ENCODE measurements at regions of chr5 and their contacts with region 1.

Region 1: GRCh38 chr5:69334793-69335268 is 2.2 kb upstream of the CCDC125 start:
- DNase-seq: peak; percentile 72
- ATAC-seq: peak; percentile 81
- H3K4me3 ChIP-seq: peak overlapping the region; percentile 51 to 61 (median 51)
- H3K27ac ChIP-seq: no peak overlapping the region
- H3K4me1 ChIP-seq: peaks cover 53% of the 10 kb centered on the region
- H3K27me3 ChIP-seq: no peaks in the 10 kb centered on the region; a peak in 1 of 5 replicates
- CTCF ChIP-seq: peak; percentile 94
- EP300 ChIP-seq: no peak
- POLR2A ChIP-seq: no peak
- RAD21 ChIP-seq: peak; percentile 91

Region 2: DNA sequence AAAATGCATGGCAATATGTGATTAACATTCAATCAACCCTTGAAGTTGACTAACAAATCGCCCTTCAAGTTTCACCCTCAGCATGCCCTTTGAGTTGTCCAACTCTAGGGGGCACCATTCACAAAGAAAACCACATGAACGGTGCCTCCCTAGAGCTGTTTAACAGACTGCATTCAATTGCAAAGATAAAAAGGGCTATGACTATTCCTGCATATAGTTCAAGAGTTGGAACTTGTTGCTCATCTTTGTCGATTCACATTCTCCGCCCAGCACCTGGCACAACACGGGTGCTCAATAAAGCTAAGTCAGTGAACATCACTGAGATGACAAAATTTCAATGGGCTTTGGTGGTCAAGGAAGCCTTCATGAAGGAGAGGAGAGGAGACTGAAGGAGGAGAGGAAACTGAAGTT is 310.6 kb before region 1 on chr5:
- CTCF ChIA-PET with region 1: no interaction called
- POLR2A ChIA-PET with region 1: no interaction called
- in situ Hi-C with region 1: no loop called
- intact Hi-C with region 1: loop called (anchors 1 kb)
- DNase-seq: peak; percentile 58
- ATAC-seq: peak; percentile 90
- H3K4me3 ChIP-seq: no peak overlapping the region
- H3K27ac ChIP-seq: no peak overlapping the region
- H3K4me1 ChIP-seq: no peaks in the 10 kb centered on the region
- H3K27me3 ChIP-seq: no peaks in the 10 kb centered on the region; a peak in 1 of 5 replicates
- CTCF ChIP-seq: peak; percentile 84
- EP300 ChIP-seq: no peak
- POLR2A ChIP-seq: no peak
- RAD21 ChIP-seq: peak; percentile 82

Region 3: DNA sequence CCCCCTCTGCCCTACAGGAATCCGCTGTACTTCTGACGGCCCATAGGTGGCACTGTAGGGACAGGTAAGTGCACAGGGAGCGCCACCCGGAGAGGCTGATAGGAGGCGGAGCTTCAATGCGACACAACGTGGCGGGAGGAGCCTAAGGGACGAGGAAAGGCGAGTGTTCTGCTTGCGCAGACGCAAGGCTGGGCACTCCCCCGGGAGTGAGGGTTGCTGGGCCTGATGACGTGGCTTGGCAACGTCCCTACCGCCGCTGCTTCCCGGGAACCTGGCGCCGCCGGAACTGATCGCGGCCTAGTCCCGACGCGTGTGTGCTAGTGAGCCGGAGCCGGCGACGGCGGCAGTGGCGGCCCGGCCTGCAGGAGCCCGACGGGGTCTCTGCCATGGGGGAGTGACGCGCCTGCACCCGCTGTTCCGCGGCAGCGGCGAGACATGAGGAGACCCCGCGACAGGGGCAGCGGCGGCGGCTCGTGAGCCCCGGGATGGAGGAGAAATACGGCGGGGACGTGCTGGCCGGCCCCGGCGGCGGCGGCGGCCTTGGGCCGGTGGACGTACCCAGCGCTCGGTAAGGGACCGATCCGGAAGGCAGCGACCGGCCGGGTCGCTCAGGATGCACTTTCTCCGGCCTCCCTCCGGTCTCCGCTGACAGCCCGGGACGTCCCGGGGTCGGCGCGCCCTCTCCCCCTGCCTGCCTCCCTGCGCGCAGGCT is 240.9 kb before region 1 on chr5 and contains the start of gene SLC30A5:
- CTCF ChIA-PET with region 1: no interaction called
- POLR2A ChIA-PET with region 1: interaction called, 27 read pairs
- in situ Hi-C with region 1: loop called (anchors 10 kb)
- intact Hi-C with region 1: loop called (anchors 2 kb)
- DNase-seq: peak; percentile 98
- ATAC-seq: peak; percentile 98
- H3K4me3 ChIP-seq: peak within 1 kb of the TSS; percentile 70 to 88 (median 72)
- H3K27ac ChIP-seq: peak within 1 kb of the TSS; percentile 88
- H3K4me1 ChIP-seq: peaks cover 47% of the 10 kb centered on the region
- H3K27me3 ChIP-seq: no peaks in the 10 kb centered on the region
- CTCF ChIP-seq: peak; percentile 98
- EP300 ChIP-seq: 0 out of 4 replicates have a peak, but pooled peaks have one; percentile 7 to 14
- POLR2A ChIP-seq: peak; percentile 92 to 95
- RAD21 ChIP-seq: peak; percentile 76
- total RNA-seq, gene SLC30A5: 38.0 and 53.6 TPM in 2 replicates

Region 4: DNA sequence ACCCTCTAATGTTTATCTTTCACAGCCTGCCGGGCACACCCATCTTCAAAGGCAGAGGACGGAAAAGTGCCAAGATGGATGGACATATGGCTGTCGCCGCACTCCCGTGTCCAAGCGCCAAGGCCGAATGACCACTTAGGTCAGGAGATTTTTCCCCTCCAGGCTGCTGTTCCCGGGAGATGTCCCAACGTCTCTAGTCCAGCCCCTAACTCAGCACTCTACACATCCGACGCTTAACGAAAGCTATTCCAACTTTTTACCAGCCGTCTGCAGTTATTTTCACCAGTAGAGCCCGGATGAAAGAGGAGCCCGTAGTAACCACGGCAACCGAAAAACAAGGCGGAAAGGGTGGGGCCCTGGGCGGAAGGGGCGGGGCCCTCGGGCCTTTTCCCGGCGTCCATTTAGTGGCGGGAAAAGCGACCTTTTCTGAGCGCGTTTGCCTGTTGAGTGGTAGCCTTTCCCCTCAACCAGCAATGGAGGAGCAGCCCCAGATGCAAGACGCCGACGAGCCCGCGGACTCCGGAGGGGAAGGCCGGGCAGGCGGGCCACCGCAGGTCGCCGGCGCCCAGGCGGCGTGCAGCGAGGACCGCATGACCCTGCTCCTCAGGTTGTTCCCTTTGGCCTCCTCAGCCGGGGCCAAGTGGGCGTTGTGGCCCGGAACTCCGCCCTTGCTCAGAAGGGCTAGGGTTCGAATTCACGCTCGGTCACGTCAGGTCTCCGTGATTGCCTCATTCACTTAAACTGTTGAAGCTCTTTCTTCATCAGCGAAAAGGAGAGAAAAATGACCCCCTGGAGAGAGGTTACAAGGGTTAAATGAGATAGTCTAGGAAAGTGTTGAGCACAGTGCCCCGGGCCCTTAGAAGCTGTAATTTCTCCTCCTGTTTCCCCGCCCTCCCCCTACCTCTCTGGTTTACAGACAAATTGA is 145.4 kb before region 1 on chr5 and contains the start of gene CENPH:
- CTCF ChIA-PET with region 1: no interaction called
- POLR2A ChIA-PET with region 1: no interaction called
- in situ Hi-C with region 1: no loop called
- intact Hi-C with region 1: loop called (anchors 1 kb)
- DNase-seq: peak; percentile 88
- ATAC-seq: peak; percentile 94
- H3K4me3 ChIP-seq: peak within 1 kb of the TSS; percentile 71 to 91 (median 76)
- H3K27ac ChIP-seq: peak within 1 kb of the TSS; percentile 88
- H3K4me1 ChIP-seq: peaks cover 12% of the 10 kb centered on the region
- H3K27me3 ChIP-seq: no peaks in the 10 kb centered on the region; a peak in 1 of 5 replicates
- CTCF ChIP-seq: no peak
- EP300 ChIP-seq: no peak
- POLR2A ChIP-seq: peak; percentile 59 to 74
- RAD21 ChIP-seq: no peak
- total RNA-seq, gene CENPH: 28.8 and 36.2 TPM in 2 replicates

Region 5: GRCh38 chr5:69271376-69271775 is 63.5 kb before region 1 on chr5:
- CTCF ChIA-PET with region 1: interaction called, 4 read pairs
- POLR2A ChIA-PET with region 1: interaction called, 8 read pairs
- in situ Hi-C with region 1: loop called (anchors 10 kb)
- intact Hi-C with region 1: loop called (anchors 1 kb)
- DNase-seq: no peak
- ATAC-seq: no peak
- H3K4me3 ChIP-seq: no peak overlapping the region
- H3K27ac ChIP-seq: no peak overlapping the region
- H3K4me1 ChIP-seq: peaks cover 7% of the 10 kb centered on the region
- H3K27me3 ChIP-seq: no peaks in the 10 kb centered on the region; a peak in 1 of 5 replicates
- CTCF ChIP-seq: no peak
- EP300 ChIP-seq: no peak
- POLR2A ChIP-seq: no peak
- RAD21 ChIP-seq: no peak

Region 6: DNA sequence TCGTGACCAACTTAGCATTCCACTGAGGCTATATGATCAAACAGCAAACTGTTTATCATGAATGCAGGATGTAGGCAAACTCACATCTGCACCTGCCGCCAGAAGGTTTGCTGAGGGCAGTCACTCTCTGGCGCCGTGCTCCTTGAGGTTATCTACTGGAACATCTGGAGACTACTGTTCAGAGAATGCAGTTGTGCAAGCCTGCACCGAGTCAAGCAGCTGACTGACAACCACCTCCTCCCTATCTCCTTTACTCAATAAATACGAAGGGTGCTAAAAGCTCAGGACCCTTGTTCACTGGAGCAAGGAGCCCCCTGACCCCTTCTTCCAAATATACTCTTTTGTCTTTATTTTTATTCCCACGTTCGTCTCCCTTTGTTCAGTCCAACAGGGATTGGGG is 29.3 kb before region 1 on chr5:
- CTCF ChIA-PET with region 1: no interaction called
- POLR2A ChIA-PET with region 1: no interaction called
- in situ Hi-C with region 1: no loop called
- intact Hi-C with region 1: no loop called
- DNase-seq: no peak
- ATAC-seq: no peak
- H3K4me3 ChIP-seq: no peak overlapping the region
- H3K27ac ChIP-seq: no peak overlapping the region
- H3K4me1 ChIP-seq: no peaks in the 10 kb centered on the region
- H3K27me3 ChIP-seq: no peaks in the 10 kb centered on the region
- CTCF ChIP-seq: no peak
- EP300 ChIP-seq: no peak
- POLR2A ChIP-seq: no peak
- RAD21 ChIP-seq: no peak

Measured in HepG2 (cell line).